Tibial artery (tissue), 4 donors: ENCODE measurements at regions of chr13 and their contacts with region 1.

Region 1: GRCh38 chr13:51286135-51287002 is 53.1 kb upstream of the SERPINE3 start:
- DNase-seq: peak; percentile 62 to 84
- H3K4me3 ChIP-seq: no peak overlapping the region
- H3K27ac ChIP-seq: no peak overlapping the region
- H3K4me1 ChIP-seq: peaks cover 0 to 8% (median 3%) of the 10 kb centered on the region in 4 donors
- H3K27me3 ChIP-seq: no peaks in the 10 kb centered on the region
- CTCF ChIP-seq: peak; percentile 81 to 93

Region 2: GRCh38 chr13:51125498-51126226 is 160.7 kb before region 1 on chr13:
- intact Hi-C with region 1: loop called (anchors 10 kb)
- DNase-seq: peak in 1 of 2 donors; percentile 45
- H3K4me3 ChIP-seq: no peak overlapping the region
- H3K27ac ChIP-seq: no peak overlapping the region
- H3K4me1 ChIP-seq: no peaks in the 10 kb centered on the region
- H3K27me3 ChIP-seq: peaks cover 0 to 2% of the 10 kb centered on the region in 2 donors
- CTCF ChIP-seq: peak; percentile 55 to 57

Region 3: GRCh38 chr13:51208704-51209103 is 77.7 kb before region 1 on chr13:
- intact Hi-C with region 1: no loop called
- DNase-seq: no peak
- H3K4me3 ChIP-seq: no peak overlapping the region
- H3K27ac ChIP-seq: no peak overlapping the region
- H3K4me1 ChIP-seq: no peaks in the 10 kb centered on the region
- H3K27me3 ChIP-seq: peaks cover 0 to 23% of the 10 kb centered on the region in 2 donors
- CTCF ChIP-seq: no peak

Region 4: DNA sequence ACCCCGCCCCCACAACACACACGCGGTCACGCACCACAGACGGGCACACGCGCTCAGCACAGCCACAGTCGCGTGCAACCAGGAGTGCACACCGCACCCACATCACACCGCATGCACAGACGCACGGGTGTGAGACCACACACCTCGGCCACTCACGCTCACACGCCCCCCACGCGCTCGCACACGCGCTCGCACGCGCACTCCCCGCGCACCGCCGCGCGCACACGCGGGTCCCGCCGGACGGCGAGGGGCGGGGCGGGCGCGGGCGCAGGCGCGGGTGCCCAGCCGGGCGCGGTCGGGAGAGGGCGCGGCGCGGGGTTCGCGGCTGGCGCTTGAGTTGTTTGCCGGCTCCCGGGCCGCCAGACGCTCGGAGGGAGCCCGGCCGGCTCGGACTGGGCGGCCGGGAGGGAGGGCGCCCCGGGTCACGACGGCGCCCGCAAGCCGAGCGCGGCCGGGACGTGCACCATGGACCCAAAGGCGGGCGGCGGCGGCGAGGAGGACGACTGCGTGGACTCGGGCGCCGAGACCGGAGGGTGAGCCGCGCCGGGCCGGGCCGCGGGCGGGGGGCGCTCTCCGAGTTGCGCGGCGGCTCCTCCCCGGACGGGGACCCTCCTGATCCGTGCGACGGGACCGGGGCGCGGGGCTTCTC is 64.2 kb before region 1 on chr13 and contains the start of gene FAM124A:
- intact Hi-C with region 1: loop called (anchors 5 kb)
- DNase-seq: no peak
- H3K4me3 ChIP-seq: peak within 1 kb of the TSS; percentile 90 to 93
- H3K27ac ChIP-seq: peak within 1 kb of the TSS; percentile 51 to 63
- H3K4me1 ChIP-seq: peaks cover 0 to 19% (median 7%) of the 10 kb centered on the region in 4 donors
- H3K27me3 ChIP-seq: no peaks in the 10 kb centered on the region
- CTCF ChIP-seq: peak in 1 of 2 experiments; percentile 63